ENCODE measurements at regions of chr20 and their contacts with region 1.

Region 1: GRCh38 chr20:48904365-48905296 is 16.9 kb upstream of the ARFGEF2 start:
- DNase-seq: peak; percentile 66 to 70
- ATAC-seq: peak; percentile 52 to 78; a peak in 5 of 6 replicates
- H3K4me3 ChIP-seq: no peak overlapping the region
- H3K27ac ChIP-seq: peak overlapping the region; percentile 31 to 52; a peak in 3 of 6 replicates
- H3K4me1 ChIP-seq: peaks cover 8% of the 10 kb centered on the region
- CTCF ChIP-seq: peak; percentile 93
- EP300 ChIP-seq: no peak
- POLR2A ChIP-seq: no peak
- RAD21 ChIP-seq: peak; percentile 94 to 96

Region 2: GRCh38 chr20:48648550-48648951 is 256.1 kb before region 1 on chr20:
- CTCF ChIA-PET with region 1: interaction called, 494 read pairs
- POLR2A ChIA-PET with region 1: no interaction called
- DNase-seq: no peak
- ATAC-seq: no peak
- H3K4me3 ChIP-seq: no peak overlapping the region
- H3K27ac ChIP-seq: no peak overlapping the region
- H3K4me1 ChIP-seq: no peaks in the 10 kb centered on the region
- CTCF ChIP-seq: no peak
- EP300 ChIP-seq: no peak
- POLR2A ChIP-seq: no peak
- RAD21 ChIP-seq: no peak

Region 3: DNA sequence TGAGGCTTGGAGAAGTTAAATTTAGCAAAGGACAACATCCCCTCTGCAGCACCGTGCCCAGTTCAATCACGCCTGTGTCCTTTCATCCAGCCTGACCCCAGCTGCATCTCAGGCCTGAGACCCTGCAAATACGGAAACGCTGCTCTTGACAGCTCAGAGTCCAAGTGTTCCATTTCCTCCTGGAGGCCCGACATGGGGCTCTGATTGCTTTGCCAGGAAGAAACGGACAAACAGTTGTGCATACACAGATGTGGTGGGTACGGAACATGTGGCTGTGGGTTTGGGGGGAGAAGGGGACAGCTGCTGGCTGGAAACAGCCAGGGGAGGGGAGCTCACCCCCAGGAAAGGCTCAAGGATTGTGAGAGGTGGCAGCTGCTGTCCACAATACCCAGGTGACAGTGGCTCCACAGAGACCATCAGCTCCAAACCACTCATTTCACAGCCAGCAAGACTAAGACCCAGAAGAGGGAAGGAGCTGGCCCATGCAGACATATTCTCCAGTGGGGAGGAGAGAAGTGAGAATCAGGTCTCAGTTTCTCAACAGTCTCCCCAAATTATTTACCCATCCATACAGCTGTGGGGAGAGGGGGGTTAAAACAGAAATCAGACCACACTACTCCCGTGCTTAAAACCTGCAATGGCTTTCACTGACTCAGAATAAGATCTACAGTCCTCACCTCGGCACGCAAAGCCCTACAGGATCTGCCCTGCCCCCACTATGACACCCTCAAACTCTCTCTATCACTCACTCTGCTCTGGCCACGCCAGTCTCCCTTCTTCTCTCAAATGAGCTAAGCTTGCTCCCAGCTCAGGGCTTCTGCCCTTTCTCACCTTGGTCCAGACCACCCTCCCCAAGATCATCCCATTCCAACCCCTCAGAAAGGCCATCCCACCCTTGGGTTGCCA is 166.0 kb before region 1 on chr20:
- CTCF ChIA-PET with region 1: interaction called, 12 read pairs
- POLR2A ChIA-PET with region 1: no interaction called
- DNase-seq: no peak
- ATAC-seq: no peak
- H3K4me3 ChIP-seq: no peak overlapping the region
- H3K27ac ChIP-seq: no peak overlapping the region
- H3K4me1 ChIP-seq: no peaks in the 10 kb centered on the region
- CTCF ChIP-seq: no peak
- EP300 ChIP-seq: no peak
- POLR2A ChIP-seq: no peak
- RAD21 ChIP-seq: no peak

Region 4: GRCh38 chr20:48828022-48828743 is 76.4 kb before region 1 on chr20:
- CTCF ChIA-PET with region 1: interaction called, 18 read pairs
- POLR2A ChIA-PET with region 1: interaction called, 6 read pairs
- DNase-seq: peak; percentile 77 to 89
- ATAC-seq: peak; percentile 75 to 78
- H3K4me3 ChIP-seq: peak overlapping the region; percentile 84
- H3K27ac ChIP-seq: peak overlapping the region; percentile 92 to 98
- H3K4me1 ChIP-seq: peaks cover 37% of the 10 kb centered on the region
- CTCF ChIP-seq: no peak
- EP300 ChIP-seq: no peak; a peak in 1 of 5 replicates
- POLR2A ChIP-seq: peak; percentile 47; the same call in 1 of the 2 replicates
- RAD21 ChIP-seq: peak in 1 of 2 experiments; percentile 39; a peak in 2 of 5 replicates

Region 5: DNA sequence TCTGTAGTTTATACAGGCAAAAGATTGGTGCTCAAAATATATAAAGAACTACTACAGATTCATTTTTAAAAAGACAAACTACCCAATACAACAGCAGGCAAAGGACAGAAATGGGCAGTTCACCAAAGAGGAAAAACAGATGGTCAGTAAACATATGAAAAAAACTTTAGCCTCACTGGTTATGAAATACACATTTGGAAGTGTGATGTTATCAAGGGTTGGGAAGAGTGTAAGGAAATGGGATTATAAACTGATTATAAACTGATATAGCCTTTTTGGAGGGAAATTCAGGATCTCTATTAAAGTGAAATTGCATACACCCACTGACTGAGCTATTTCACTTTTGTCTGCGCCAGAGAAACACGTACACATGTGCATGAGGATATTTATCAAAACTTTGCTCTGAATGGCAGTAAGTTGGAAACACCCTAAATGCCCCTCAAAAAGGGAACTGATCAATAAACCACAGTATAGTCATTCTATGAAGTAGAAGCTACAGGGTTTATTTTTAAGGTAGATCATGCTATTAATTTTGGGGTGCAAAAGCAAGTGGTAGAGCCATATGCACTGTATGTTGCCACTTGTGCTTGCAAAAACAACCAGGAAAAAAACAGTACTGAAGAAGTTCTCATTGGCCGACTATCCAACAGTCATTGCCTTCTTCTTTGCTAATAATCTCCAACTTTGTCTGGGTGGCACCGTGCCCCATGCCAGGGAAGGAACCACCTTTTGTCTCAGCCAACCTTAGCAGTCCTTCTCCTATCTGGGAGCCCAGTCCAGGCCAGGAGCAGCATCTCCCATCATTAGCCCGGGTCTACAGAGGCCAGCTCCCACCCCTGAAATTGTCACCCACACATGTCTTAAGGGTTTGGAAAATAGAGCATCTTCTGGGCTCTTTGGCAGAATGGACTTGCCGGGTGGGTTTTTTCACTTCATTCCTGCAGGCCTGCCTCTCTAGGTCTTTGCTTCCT is 15.2 kb before region 1 on chr20:
- CTCF ChIA-PET with region 1: interaction called, 11 read pairs
- POLR2A ChIA-PET with region 1: no interaction called
- DNase-seq: no peak
- ATAC-seq: no peak
- H3K4me3 ChIP-seq: no peak overlapping the region
- H3K27ac ChIP-seq: no peak overlapping the region
- H3K4me1 ChIP-seq: no peaks in the 10 kb centered on the region
- CTCF ChIP-seq: no peak
- EP300 ChIP-seq: no peak
- POLR2A ChIP-seq: no peak
- RAD21 ChIP-seq: no peak

Region 6: GRCh38 chr20:48928832-48929725 is 24.4 kb after region 1 on chr20:
- CTCF ChIA-PET with region 1: no interaction called
- POLR2A ChIA-PET with region 1: no interaction called
- DNase-seq: no peak
- ATAC-seq: no peak
- H3K4me3 ChIP-seq: no peak overlapping the region
- H3K27ac ChIP-seq: no peak overlapping the region
- H3K4me1 ChIP-seq: no peaks in the 10 kb centered on the region
- CTCF ChIP-seq: no peak
- EP300 ChIP-seq: no peak
- POLR2A ChIP-seq: no peak
- RAD21 ChIP-seq: no peak

Measured in A549 (cell line).